ENCODE measurements at regions of chr15 and their contacts with region 1.

Region 1: GRCh38 chr15:74373731-74374647 is 6.5 kb upstream of the CYP11A1 start:
- DNase-seq: peak; percentile 94
- H3K4me3 ChIP-seq: peak overlapping the region; percentile 77
- H3K27ac ChIP-seq: no peak overlapping the region
- H3K4me1 ChIP-seq: 0 out of 2 replicates have a peak, but pooled peaks cover 3% of the 10 kb centered on the region
- H3K27me3 ChIP-seq: no peaks in the 10 kb centered on the region

Region 2: DNA sequence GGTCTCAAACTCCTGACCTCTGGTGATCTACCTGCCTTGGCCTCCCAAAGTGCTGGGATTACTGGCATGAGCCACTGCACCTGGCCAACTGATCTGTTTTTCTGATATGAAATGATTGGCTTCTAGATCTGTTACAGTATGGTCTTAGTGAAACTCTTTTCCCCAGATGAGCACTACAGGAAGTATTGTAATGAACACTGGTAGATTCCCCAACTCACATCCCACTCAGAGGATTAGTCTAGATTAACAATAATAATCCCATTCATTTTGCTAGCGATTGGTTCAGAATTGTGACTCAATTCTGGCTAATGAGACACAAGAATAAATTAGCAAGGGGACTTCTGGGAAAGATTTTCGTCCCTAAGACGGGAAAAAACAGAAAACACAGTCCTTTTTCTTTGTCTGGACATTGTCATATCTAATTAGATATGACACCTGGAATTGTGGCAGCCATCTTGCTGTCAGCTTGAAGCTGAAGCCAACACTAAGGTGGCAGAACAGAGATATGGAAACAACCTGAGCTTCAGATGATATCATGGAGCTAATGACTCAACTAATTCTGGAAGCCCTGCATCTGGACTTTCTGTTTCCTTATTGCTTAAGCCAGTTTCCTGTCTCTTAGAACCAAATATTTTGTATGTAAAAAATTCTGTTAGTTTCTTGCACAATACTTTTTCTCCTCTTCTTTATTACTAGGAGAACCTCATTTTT is 723.4 kb before region 1 on chr15:
- in situ Hi-C with region 1: no loop called
- DNase-seq: peak; percentile 84
- H3K4me3 ChIP-seq: no peak overlapping the region
- H3K27ac ChIP-seq: peak overlapping the region; percentile 42
- H3K4me1 ChIP-seq: peaks cover 15% of the 10 kb centered on the region; the same call in 1 of the 2 replicates
- H3K27me3 ChIP-seq: no peaks in the 10 kb centered on the region

Region 3: DNA sequence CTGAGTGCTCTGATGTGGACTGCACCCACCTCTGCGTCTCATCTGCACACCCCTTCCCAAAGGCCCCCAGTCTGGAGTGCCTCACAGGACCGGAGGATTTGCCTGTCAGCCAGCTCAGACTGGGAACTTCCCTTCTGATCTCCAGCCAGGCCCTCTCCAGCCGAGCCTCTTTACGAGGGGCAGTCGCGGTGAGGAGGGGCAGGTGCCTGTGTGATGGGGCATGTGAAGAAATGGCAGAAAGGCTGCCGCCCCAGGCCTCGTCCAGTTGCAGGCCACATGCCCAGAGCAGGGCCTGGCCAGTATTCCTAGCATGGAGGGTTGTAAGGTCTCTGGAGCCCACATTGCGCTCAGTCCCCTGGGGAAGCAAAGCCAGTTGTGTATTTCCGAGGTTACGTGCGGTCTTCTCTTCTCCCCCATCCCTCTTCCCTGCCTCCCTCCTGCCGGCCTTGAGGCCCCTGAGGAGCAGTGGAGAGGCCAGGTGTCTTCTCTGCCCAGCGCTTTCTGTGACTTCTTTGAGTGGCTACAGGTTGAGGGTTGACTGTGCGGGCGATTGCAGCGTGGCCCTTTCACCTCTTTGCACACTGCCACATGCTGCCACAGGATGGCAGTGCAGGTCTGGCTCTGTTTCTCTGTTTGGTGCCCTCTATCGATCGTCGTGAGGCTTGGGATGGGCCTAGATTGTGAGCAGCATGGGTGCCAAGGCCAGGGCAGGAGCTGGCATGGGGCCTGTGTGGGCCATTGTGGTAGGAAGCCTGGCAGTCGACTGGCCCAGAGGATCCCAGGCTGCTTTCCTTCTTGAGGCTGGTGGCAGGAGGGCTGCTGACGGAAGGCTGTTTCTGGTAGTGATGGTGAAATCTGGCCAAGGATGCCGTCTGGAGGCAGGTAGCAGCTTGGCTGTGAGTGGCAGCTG is 246.9 kb after region 1 on chr15:
- in situ Hi-C with region 1: loop called (anchors 10 kb)
- DNase-seq: peak; percentile 85
- H3K4me3 ChIP-seq: no peak overlapping the region
- H3K27ac ChIP-seq: no peak overlapping the region
- H3K4me1 ChIP-seq: peaks cover 13% of the 10 kb centered on the region
- H3K27me3 ChIP-seq: no peaks in the 10 kb centered on the region

Measured in GM23248 (cell line).